Activated T-helper 1 cell treated with anti-CD3 and anti-CD28 coated beads, Interleukin-12 subunit alpha, Interleukin-12 subunit beta, Interleukin-2, Interleukin-4 antibody, amounts not matched to agents 30 ng/mL and 10 ng/mL and 1 ng/mL, durations not matched to agents 14 hours and 24 hours and 36 hours (primary cell): ENCODE measurements at regions of chr5 and their contacts with region 1.

Region 1: DNA sequence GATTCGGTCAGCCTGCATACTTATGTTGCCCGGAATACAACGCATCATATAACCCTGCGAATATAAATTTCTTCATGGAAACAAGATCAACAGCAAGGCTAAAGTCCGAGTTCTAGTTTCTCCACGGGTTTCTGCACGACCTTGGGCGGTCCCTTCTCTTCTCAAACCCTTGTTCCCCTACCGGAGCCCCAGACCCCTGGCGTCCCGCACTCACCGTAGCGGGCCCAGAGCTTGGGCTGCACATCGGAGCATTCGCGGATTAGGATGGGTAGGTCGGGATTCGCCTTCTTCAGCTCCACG is 438 bp downstream of the NDUFA2 start:
- DNase-seq: no peak
- H3K4me3 Mint-ChIP-seq: peak overlapping the region; percentile 99
- H3K27ac Mint-ChIP-seq: peak overlapping the region; percentile 67
- H3K4me1 Mint-ChIP-seq: peaks cover 38% of the 10 kb centered on the region
- H3K27me3 Mint-ChIP-seq: no peaks in the 10 kb centered on the region

Region 2: GRCh38 chr5:139293504-139294373 is 1353.3 kb before region 1 on chr5 and contains the start of gene MATR3:
- intact Hi-C with region 1: loop called (anchors 10 kb)
- DNase-seq: peak; percentile 88
- H3K4me3 Mint-ChIP-seq: peak within 1 kb of the TSS; percentile 95
- H3K27ac Mint-ChIP-seq: peak within 1 kb of the TSS; percentile 94
- H3K4me1 Mint-ChIP-seq: peaks cover 37% of the 10 kb centered on the region
- H3K27me3 Mint-ChIP-seq: no peaks in the 10 kb centered on the region
- total RNA-seq, gene MATR3: 232 and 258 TPM in 2 replicates

Region 3: DNA sequence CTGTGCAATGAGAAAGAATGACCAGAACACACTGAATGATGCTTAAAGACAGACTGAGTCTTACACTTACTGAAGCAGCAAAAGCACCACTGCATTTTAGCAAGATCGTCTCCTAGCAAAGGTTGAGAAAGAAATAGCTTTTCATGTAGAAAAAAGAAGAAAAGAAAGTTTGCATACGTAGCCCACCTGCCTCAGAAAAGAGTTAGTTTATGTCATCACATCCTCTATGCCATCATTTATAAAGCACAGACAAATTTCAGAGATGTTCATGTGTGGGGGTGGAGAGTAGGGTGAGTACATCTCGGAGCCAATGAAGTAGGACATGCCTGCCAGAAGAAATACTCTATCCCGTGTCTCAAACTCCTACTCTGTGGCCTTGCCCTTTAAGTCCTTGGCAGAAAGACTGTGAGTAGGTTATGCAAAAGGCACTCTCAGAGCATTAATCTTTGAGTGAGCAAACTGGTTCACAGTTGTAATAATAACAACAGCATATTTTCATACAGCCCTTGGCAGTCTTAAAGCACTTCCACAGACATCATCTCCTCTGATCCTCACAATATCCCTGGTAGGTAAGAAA is 626.3 kb before region 1 on chr5:
- intact Hi-C with region 1: no loop called
- DNase-seq: no peak
- H3K4me3 Mint-ChIP-seq: no peak overlapping the region
- H3K27ac Mint-ChIP-seq: no peak overlapping the region
- H3K4me1 Mint-ChIP-seq: no peaks in the 10 kb centered on the region
- H3K27me3 Mint-ChIP-seq: peaks cover 6% of the 10 kb centered on the region

Region 4: DNA sequence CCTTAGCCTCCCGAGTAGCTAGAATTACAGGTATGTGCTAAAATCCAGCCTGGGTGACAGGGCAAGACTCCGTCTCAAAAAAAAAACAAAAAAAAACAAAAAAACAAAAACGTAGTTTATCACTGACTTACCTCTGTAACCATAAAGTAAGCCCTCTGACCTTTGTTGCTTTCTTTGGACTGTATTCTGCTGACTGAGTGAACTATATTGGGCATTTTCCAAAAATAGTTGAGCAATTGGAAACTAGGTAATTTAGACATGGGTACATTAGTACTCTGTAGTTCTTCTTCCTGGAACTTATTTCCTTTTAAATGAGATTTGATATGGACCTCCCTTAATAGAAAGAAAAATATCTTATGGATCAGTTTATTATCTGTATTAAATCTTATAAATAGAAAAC is 178.8 kb before region 1 on chr5:
- intact Hi-C with region 1: no loop called
- DNase-seq: no peak
- H3K4me3 Mint-ChIP-seq: no peak overlapping the region
- H3K27ac Mint-ChIP-seq: no peak overlapping the region
- H3K4me1 Mint-ChIP-seq: no peaks in the 10 kb centered on the region
- H3K27me3 Mint-ChIP-seq: no peaks in the 10 kb centered on the region

Region 5: GRCh38 chr5:140547508-140548299 is 99.3 kb before region 1 on chr5 and contains the start of gene EIF4EBP3:
- intact Hi-C with region 1: loop called (anchors 1 kb)
- DNase-seq: peak; percentile 81
- H3K4me3 Mint-ChIP-seq: peak within 1 kb of the TSS; percentile 80
- H3K27ac Mint-ChIP-seq: peak within 1 kb of the TSS; percentile 82
- H3K4me1 Mint-ChIP-seq: peaks cover 48% of the 10 kb centered on the region
- H3K27me3 Mint-ChIP-seq: no peaks in the 10 kb centered on the region
- total RNA-seq, gene EIF4EBP3: 12.7 and 16.1 TPM in 2 replicates

Region 6: GRCh38 chr5:140557136-140557805 is 89.7 kb before region 1 on chr5 and contains the start of gene SRA1:
- intact Hi-C with region 1: loop called (anchors 2 kb)
- DNase-seq: peak; percentile 90
- H3K4me3 Mint-ChIP-seq: peak within 1 kb of the TSS; percentile 88
- H3K27ac Mint-ChIP-seq: peak within 1 kb of the TSS; percentile 89
- H3K4me1 Mint-ChIP-seq: peaks cover 47% of the 10 kb centered on the region
- H3K27me3 Mint-ChIP-seq: no peaks in the 10 kb centered on the region
- total RNA-seq, gene SRA1: 55.6 and 59.2 TPM in 2 replicates

Region 7: DNA sequence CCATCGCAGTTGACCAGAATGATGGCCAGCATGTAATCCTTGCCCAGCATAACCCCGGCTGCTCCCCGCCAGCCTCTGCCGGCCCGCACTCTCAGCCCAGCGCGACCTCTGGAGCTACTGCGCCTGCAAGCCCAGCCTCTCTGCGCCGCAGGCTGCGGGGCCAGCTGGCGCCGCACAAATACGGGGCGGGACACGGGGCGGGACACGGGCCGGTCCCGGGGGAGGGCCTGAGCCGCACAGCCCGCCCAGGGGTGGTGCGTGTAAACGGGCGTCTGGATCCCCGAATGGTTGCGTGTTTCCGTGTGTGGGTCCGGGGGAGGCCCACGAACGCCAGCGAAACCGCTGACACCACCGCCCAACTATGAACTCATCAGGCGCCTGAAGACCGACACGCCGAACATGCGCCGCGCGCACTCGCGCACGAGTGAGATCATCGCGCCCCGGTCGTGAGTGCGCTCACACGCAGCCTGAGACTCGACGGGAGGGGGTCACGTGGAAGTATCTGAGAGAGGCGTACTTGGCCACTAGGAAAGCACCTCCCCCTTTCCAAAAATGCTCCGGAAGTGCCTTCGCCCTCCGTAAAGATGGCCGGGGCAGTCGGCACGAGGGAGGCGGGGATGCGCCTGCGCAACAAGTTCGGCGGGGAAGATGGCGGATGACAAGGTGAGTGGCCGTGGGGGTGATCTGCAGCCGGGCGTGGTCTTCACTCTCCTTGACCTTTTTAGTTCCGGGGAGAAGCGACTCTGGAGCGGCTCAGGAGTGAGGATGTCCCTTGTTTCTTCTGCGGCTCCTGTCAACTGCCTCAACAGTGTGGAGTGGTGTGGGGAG is 82.6 kb before region 1 on chr5 and contains the starts of genes APBB3 and SLC35A4:
- intact Hi-C with region 1: loop called (anchors 1 kb)
- DNase-seq: peak; percentile 98
- H3K4me3 Mint-ChIP-seq: peak within 1 kb of the TSS; percentile 95
- H3K27ac Mint-ChIP-seq: peak within 1 kb of the TSS; percentile 96
- H3K4me1 Mint-ChIP-seq: peaks cover 54% of the 10 kb centered on the region
- H3K27me3 Mint-ChIP-seq: no peaks in the 10 kb centered on the region
- total RNA-seq, gene APBB3: 17.2 and 21.2 TPM in 2 replicates
- total RNA-seq, gene SLC35A4: 94.3 and 107 TPM in 2 replicates

Region 8: DNA sequence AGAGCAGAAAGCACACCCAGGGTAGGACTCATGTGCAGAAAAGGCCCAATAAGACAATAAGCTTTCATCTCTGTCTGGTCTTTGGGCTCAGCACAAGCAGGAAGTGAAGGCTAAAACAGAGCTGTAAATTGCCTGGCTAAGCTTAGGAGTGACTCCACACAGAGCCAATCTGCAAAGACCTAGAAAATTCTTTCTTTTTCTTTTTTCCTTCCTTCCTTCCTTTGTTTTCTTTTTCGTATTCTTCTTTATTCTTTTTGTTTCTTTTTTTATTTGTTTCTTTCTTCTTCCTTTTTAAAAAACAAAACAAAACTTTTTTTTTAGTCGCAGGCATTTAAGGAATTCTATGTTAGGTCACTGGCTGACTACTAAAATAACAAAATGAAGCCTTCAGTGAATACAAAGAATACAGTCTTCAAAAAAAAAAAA is 70.2 kb before region 1 on chr5:
- intact Hi-C with region 1: no loop called
- DNase-seq: no peak
- H3K4me3 Mint-ChIP-seq: no peak overlapping the region
- H3K27ac Mint-ChIP-seq: no peak overlapping the region
- H3K4me1 Mint-ChIP-seq: no peaks in the 10 kb centered on the region
- H3K27me3 Mint-ChIP-seq: peaks cover 7% of the 10 kb centered on the region

Region 9: GRCh38 chr5:140690941-140691924 is 44.2 kb after region 1 on chr5 and contains the starts of genes HARS1 and HARS2:
- intact Hi-C with region 1: loop called (anchors 1 kb)
- DNase-seq: peak; percentile 81
- H3K4me3 Mint-ChIP-seq: peak within 1 kb of the TSS; percentile 100
- H3K27ac Mint-ChIP-seq: peak within 1 kb of the TSS; percentile 95
- H3K4me1 Mint-ChIP-seq: peaks cover 50% of the 10 kb centered on the region
- H3K27me3 Mint-ChIP-seq: no peaks in the 10 kb centered on the region
- total RNA-seq, gene HARS1: 112 and 114 TPM in 2 replicates
- total RNA-seq, gene HARS2: 31.2 and 32.7 TPM in 2 replicates

Region 10: GRCh38 chr5:140700177-140701144 is 53.5 kb after region 1 on chr5 and contains the start of gene ZMAT2:
- intact Hi-C with region 1: loop called (anchors 1 kb)
- DNase-seq: peak; percentile 92
- H3K4me3 Mint-ChIP-seq: peak within 1 kb of the TSS; percentile 96
- H3K27ac Mint-ChIP-seq: peak within 1 kb of the TSS; percentile 88
- H3K4me1 Mint-ChIP-seq: peaks cover 22% of the 10 kb centered on the region
- H3K27me3 Mint-ChIP-seq: no peaks in the 10 kb centered on the region
- total RNA-seq, gene ZMAT2: 68.0 and 71.2 TPM in 2 replicates